Left cardiac atrium (tissue), 4 donors: ENCODE measurements at regions of chr21 and their contacts with region 1.

Region 1: GRCh38 chr21:38170280-38170679 is 86.5 kb upstream of the KCNJ15 start:
- DNase-seq: peak; percentile 24
- ATAC-seq: peak in 1 of 2 donors; percentile 41

Region 2: DNA sequence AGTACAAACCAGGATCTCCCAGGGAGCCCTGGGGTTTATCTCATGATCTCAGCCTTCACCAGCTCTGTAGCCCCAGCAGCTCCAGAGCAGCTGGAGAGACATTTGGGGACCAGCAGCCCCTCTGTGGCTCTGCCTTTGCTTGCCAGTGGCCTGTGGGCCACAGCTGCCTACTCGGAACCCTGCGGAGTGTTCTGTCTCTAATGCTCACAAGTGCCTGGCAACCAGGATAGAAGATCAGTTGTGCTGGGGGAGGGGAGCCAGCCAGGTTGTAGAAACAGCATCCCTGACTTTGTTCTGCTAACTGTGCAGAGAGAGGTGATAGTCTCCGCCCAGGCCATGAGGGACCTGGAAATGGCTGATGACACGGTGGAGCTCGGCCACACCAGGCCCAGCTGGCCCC is 35.7 kb after region 1 on chr21:
- intact Hi-C with region 1: loop called in 1 of 2 experiments (anchors 5 kb)
- DNase-seq: no peak
- ATAC-seq: no peak